ENCODE measurements at regions of chr7 and their contacts with region 1.

Region 1: GRCh38 chr7:91034459-91035368 is 229.5 kb upstream of the FZD1 start:
- DNase-seq: no peak
- H3K4me3 ChIP-seq: no peak overlapping the region
- H3K27ac ChIP-seq: no peak overlapping the region
- H3K4me1 ChIP-seq: peaks cover 13% of the 10 kb centered on the region
- H3K27me3 ChIP-seq: no peaks in the 10 kb centered on the region
- CTCF ChIP-seq: peak; percentile 76

Region 2: GRCh38 chr7:90455163-90456030 is 579.3 kb before region 1 on chr7:
- intact Hi-C with region 1: loop called (anchors 5 kb)
- DNase-seq: no peak
- H3K4me3 ChIP-seq: peak overlapping the region; percentile 50
- H3K27ac ChIP-seq: no peak overlapping the region
- H3K4me1 ChIP-seq: peaks cover 9% of the 10 kb centered on the region
- H3K27me3 ChIP-seq: no peaks in the 10 kb centered on the region
- CTCF ChIP-seq: peak; percentile 73

Region 3: GRCh38 chr7:90552521-90552920 is 482.2 kb before region 1 on chr7:
- intact Hi-C with region 1: loop called (anchors 10 kb)
- DNase-seq: no peak
- H3K4me3 ChIP-seq: no peak overlapping the region
- H3K27ac ChIP-seq: no peak overlapping the region
- H3K4me1 ChIP-seq: no peaks in the 10 kb centered on the region
- H3K27me3 ChIP-seq: no peaks in the 10 kb centered on the region
- CTCF ChIP-seq: peak; percentile 58

Measured in left ventricle myocardium inferior (tissue), 1 donor.